ENCODE measurements at regions of chr2 and their contacts with region 1.

Region 1: GRCh38 chr2:24084386-24085361 is at the start of gene TP53I3:
- DNase-seq: peak; percentile 87
- ATAC-seq: peak; percentile 92
- H3K4me3 ChIP-seq: peak within 1 kb of the TSS; percentile 67 to 84 (median 74)
- H3K27ac ChIP-seq: peak within 1 kb of the TSS; percentile 89
- H3K4me1 ChIP-seq: peaks cover 30% of the 10 kb centered on the region
- H3K27me3 ChIP-seq: no peaks in the 10 kb centered on the region; a peak in 1 of 5 replicates
- CTCF ChIP-seq: peak; percentile 94
- EP300 ChIP-seq: no peak; a peak in 1 of 4 replicates
- POLR2A ChIP-seq: peak; percentile 73 to 75
- RAD21 ChIP-seq: peak; percentile 98
- total RNA-seq, gene TP53I3: 44.1 and 48.2 TPM in 2 replicates

Region 2: DNA sequence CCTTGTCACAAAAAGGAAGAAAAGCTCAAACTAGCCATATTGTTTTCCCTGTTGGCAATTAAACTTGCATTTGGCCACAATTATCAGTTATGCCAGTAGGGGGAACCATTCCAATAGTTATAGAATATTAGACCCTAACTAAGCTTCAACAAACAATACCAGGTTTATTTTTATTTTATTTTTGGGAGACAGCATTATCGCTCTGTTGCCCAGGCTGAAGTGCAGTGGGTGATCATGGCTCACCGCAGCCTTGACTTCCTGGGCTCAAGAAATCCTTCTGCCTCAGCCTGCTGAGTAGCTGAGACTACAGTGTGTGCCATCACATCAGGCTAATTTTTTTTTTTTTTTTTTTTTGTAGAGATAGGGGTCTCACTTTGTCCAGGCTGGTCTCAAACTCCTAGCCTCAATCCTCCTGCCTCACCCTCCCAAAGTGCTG is 259.9 kb before region 1 on chr2:
- CTCF ChIA-PET with region 1: no interaction called
- POLR2A ChIA-PET with region 1: interaction called, 8 read pairs
- in situ Hi-C with region 1: no loop called
- intact Hi-C with region 1: loop called (anchors 5 kb)
- DNase-seq: peak; percentile 51
- ATAC-seq: peak; percentile 78
- H3K4me3 ChIP-seq: no peak overlapping the region
- H3K27ac ChIP-seq: no peak overlapping the region
- H3K4me1 ChIP-seq: peaks cover 8% of the 10 kb centered on the region
- H3K27me3 ChIP-seq: no peaks in the 10 kb centered on the region
- CTCF ChIP-seq: peak; percentile 77
- EP300 ChIP-seq: no peak
- POLR2A ChIP-seq: no peak
- RAD21 ChIP-seq: peak; percentile 47; the same call in 1 of the 2 replicates

Region 3: DNA sequence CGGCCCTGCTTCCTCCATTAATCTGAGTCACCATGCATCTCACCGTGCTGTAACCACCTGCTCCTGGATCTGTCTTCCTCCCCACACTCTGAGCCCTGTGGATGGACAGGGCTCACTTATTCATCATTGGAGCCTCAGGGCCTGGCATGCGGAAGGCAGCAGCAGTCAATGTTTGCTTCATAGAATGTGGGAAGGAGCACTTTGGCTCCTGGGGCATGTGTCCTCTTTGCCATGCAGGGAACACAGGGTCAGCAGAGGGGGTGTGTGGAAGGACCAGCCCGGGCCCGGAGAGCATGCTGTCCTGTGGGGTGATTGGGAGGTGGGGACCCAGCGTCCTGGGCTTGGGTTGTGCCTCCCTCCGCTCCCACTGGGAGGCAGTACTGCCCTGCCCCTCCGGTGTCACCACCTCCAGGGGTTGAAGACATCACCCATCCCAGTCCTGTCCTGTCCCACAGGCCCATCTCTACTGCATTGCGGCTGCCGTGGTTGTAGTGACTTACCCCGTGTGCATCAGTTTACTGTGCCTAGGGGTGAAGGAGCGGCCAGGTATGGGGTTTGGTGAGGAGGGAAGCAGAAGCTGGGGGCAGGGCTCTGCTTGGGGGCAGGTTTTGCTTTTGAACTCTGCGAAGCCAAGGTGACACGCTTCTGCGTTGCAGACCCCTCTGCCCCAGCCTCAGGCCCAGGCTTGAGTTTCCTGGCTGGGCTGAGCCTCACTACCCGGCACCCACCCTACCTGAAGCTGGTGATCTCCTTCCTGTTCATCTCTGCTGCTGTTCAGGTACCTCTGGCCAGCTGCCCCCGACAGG is 63.3 kb before region 1 on chr2:
- CTCF ChIA-PET with region 1: interaction called, 8 read pairs
- POLR2A ChIA-PET with region 1: interaction called, 46 read pairs
- in situ Hi-C with region 1: no loop called
- intact Hi-C with region 1: loop called (anchors 1 kb)
- DNase-seq: peak; percentile 61
- ATAC-seq: peak; percentile 84
- H3K4me3 ChIP-seq: no peak overlapping the region
- H3K27ac ChIP-seq: peak overlapping the region; percentile 41
- H3K4me1 ChIP-seq: peaks cover 43% of the 10 kb centered on the region
- H3K27me3 ChIP-seq: no peaks in the 10 kb centered on the region
- CTCF ChIP-seq: peak; percentile 95
- EP300 ChIP-seq: no peak
- POLR2A ChIP-seq: no peak
- RAD21 ChIP-seq: peak; percentile 97

Region 4: DNA sequence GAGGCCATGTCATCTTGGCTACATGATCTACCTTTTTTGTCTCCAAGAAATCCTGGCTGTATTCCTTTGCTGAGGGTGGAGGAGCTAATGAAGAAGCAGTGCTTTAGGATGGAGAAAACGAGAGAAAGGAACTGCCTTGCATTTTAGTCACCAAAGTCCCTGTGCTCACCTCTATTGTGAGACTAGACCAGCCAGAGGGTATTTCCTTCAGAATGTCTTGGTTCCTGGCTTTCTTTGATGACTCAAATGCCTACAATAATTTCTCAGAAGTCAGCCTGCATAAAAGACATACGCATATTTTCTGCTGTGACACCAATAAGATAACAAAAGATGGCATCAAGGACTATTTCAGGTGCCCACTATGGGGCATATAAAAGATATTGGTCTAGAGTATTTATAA is 19.3 kb before region 1 on chr2:
- CTCF ChIA-PET with region 1: no interaction called
- POLR2A ChIA-PET with region 1: interaction called, 28 read pairs
- in situ Hi-C with region 1: no loop called
- intact Hi-C with region 1: no loop called
- DNase-seq: no peak
- ATAC-seq: no peak
- H3K4me3 ChIP-seq: no peak overlapping the region
- H3K27ac ChIP-seq: no peak overlapping the region
- H3K4me1 ChIP-seq: no peaks in the 10 kb centered on the region
- H3K27me3 ChIP-seq: no peaks in the 10 kb centered on the region
- CTCF ChIP-seq: no peak
- EP300 ChIP-seq: no peak
- POLR2A ChIP-seq: no peak
- RAD21 ChIP-seq: no peak

Region 5: DNA sequence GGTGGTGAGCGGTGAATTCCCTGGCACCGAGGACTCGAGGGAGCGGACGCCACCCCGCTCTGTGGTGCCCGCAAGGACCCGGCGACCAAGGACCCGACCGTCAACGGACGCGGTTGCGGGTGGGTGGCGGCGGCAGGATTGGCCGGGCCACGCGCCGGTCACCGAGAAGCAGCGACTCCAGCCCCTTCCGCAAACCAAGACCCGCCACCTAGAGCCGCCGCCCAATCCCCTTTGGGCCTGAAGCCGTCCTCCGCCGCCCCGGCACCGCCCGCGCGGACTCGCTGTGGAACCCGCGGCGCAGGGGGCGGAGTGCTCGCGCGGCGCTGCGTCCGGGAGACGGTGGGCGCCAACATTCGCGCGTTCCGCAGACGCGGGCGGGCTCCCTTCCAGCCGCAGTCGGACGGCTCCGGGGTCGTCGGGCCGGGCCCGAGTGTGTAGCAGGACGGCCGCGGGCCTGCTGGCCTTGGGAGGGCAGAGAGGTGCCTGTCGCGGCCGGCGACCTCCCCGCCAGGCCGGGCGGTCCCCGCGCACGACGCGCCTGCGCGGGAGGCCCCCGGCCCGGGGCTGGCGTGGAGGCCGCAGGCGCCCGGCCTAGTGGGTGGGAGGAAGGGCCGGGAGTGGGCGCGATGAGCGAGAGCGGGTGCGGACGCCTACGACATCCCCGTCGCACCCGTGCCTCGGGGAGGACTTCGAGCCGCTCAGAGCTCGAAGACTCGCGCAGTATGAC is 38.7 kb after region 1 on chr2 and contains the starts of genes FAM228B and PFN4:
- CTCF ChIA-PET with region 1: interaction called, 4 read pairs
- POLR2A ChIA-PET with region 1: interaction called, 36 read pairs
- in situ Hi-C with region 1: no loop called
- intact Hi-C with region 1: loop called (anchors 1 kb)
- DNase-seq: peak; percentile 53
- ATAC-seq: peak; percentile 97
- H3K4me3 ChIP-seq: peak within 1 kb of the TSS; percentile 54 to 85 (median 68)
- H3K27ac ChIP-seq: peak within 1 kb of the TSS; percentile 63
- H3K4me1 ChIP-seq: peaks cover 17% of the 10 kb centered on the region
- H3K27me3 ChIP-seq: no peaks in the 10 kb centered on the region; a peak in 1 of 5 replicates
- CTCF ChIP-seq: peak; percentile 21; the same call in 1 of the 2 replicates
- EP300 ChIP-seq: no peak
- POLR2A ChIP-seq: peak; percentile 51 to 87
- RAD21 ChIP-seq: peak; percentile 64
- total RNA-seq, gene FAM228B: 0.45 and 1.1 TPM in 2 replicates
- total RNA-seq, gene PFN4: 0.20 TPM in 1 of 2 replicates, not detected in the other

Region 6: DNA sequence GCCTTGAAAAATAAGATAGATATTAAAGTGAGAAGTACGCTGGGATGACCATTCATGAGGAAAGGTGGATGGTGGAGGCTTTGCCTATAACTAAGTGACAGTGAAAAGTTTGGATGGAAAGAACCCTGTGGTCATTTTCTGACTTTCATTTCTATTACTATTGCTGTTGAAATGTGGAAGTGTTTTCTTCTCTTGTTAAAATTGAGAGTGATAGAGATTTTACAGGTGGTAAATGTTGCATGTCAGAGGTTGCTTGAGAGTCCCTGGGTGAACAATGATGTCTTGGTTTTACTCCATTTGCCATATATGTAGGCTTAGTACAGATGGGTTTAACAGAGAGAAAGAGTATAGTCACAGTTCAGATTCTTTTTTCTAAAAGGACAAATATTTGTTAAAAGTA is 424.8 kb after region 1 on chr2:
- CTCF ChIA-PET with region 1: no interaction called
- POLR2A ChIA-PET with region 1: no interaction called
- in situ Hi-C with region 1: no loop called
- intact Hi-C with region 1: no loop called
- DNase-seq: no peak
- ATAC-seq: no peak
- H3K4me3 ChIP-seq: no peak overlapping the region
- H3K27ac ChIP-seq: no peak overlapping the region
- H3K4me1 ChIP-seq: no peaks in the 10 kb centered on the region
- H3K27me3 ChIP-seq: no peaks in the 10 kb centered on the region
- CTCF ChIP-seq: no peak
- EP300 ChIP-seq: no peak
- POLR2A ChIP-seq: no peak
- RAD21 ChIP-seq: no peak